Heart left ventricle (tissue), 16 donors: ENCODE measurements at regions of chr22 and their contacts with region 1.

Region 1: DNA sequence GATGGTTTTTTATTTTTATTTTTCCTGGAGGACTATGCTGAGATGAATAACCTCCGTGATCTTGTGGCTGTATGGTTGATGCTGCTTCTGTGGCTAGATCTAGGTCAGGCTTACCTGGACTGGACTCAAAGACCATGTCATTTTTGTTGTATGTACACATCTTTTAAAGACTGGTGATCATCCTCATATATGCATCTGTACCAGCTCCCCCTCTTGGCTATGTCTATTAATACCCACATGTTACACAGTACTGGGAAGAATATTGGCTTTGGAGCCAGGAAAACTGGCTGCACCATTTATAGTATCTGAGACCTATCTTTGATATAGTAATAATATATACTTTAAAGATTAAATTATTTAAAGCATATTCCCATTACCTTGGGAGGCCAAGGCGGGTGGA is 18.4 kb upstream of the PITPNB start:
- DNase-seq: no peak
- ATAC-seq: no peak
- H3K4me3 ChIP-seq: no peak overlapping the region
- H3K27ac ChIP-seq: no peak overlapping the region
- H3K4me1 ChIP-seq: no peaks in the 10 kb centered on the region
- H3K27me3 ChIP-seq: no peaks in the 10 kb centered on the region
- CTCF ChIP-seq: peak in 3 of 12 donors; percentile 8 to 23 (median 19)
- POLR2A ChIP-seq: no peak

Region 2: DNA sequence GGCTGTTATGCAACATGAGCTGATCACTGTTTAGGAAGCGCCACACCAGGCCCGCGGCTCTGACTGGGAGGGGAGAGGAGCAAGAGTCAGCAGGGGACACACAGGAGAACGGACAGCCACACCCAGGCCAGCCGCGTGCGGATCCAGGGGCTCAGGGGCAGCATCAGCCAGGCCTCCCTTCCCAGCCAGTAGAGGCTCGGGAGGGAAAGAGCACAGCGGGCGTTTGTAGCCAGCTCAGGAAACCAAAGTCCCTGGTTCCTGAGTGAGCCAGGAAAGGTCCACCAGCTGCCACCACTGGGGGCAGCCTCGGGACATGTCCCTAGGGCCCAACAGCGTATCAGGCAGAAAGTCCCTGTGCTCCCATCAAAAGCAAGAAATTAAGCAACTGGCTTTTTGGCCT is 53.4 kb after region 1 on chr22:
- intact Hi-C with region 1: loop called in 1 of 10 experiments (anchors 10 kb)
- DNase-seq: peak; percentile 64 to 85 (median 70)
- ATAC-seq: peak; percentile 52 to 85 (median 79)
- H3K4me3 ChIP-seq: peak overlapping the region in 7 of 12 donors; percentile 0 to 17 (median 6)
- H3K27ac ChIP-seq: peak overlapping the region in 10 of 12 donors; percentile 39 to 71 (median 63)
- H3K4me1 ChIP-seq: peaks cover 2 to 22% (median 14%) of the 10 kb centered on the region in 12 donors
- H3K27me3 ChIP-seq: no peaks in the 10 kb centered on the region
- CTCF ChIP-seq: peak; percentile 35 to 75 (median 54)
- POLR2A ChIP-seq: no peak